ENCODE measurements at regions of chr1 and their contacts with region 1.

Region 1: DNA sequence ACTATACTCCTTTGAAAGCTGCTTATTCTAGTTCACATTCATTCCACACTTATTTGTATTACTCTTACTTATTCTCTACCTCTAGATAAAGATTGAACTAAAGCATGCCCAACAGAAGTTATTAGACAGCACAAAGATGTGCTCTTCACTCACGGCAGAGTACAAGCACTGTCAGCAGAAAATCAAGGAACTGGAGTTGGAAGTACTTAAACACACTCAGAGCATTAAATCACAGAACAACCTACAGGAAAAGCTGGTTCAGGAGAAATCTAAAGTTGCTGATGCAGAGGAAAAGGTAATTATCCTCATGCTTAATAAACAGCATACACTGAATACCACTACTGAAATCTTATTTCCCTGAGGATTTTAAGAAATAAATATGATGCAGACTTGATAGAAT is 81.3 kb upstream of the PPIH start:
- DNase-seq: no peak
- ATAC-seq: no peak
- H3K4me3 Mint-ChIP-seq: no peak overlapping the region
- H3K27ac Mint-ChIP-seq: no peak overlapping the region
- H3K4me1 Mint-ChIP-seq: no peaks in the 10 kb centered on the region
- H3K27me3 Mint-ChIP-seq: no peaks in the 10 kb centered on the region
- CTCF ChIP-seq: no peak

Region 2: DNA sequence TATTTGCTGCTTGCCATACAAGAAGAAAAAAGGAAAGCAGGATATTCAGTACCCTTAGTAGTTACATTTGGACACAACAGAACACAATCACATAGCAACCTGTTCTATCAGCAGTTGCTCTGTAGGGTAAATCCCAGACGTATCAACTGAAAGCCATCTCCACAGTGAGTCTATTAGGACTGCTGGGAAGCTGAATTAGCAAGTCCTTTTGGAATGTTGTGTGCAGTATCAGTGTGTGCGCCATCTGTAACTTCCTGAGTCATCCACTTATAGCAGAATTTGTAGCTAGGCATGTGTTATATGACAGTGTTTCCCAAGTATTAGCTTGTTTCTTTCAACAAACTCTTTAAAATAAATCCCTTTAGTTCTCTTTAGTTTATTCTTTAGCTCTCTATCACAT is 92.6 kb before region 1 on chr1:
- CTCF ChIA-PET with region 1: no interaction called
- POLR2A ChIA-PET with region 1: no interaction called
- intact Hi-C with region 1: no loop called
- DNase-seq: no peak
- ATAC-seq: no peak
- H3K4me3 Mint-ChIP-seq: no peak overlapping the region
- H3K27ac Mint-ChIP-seq: no peak overlapping the region
- H3K4me1 Mint-ChIP-seq: no peaks in the 10 kb centered on the region
- H3K27me3 Mint-ChIP-seq: no peaks in the 10 kb centered on the region
- CTCF ChIP-seq: no peak

Region 3: DNA sequence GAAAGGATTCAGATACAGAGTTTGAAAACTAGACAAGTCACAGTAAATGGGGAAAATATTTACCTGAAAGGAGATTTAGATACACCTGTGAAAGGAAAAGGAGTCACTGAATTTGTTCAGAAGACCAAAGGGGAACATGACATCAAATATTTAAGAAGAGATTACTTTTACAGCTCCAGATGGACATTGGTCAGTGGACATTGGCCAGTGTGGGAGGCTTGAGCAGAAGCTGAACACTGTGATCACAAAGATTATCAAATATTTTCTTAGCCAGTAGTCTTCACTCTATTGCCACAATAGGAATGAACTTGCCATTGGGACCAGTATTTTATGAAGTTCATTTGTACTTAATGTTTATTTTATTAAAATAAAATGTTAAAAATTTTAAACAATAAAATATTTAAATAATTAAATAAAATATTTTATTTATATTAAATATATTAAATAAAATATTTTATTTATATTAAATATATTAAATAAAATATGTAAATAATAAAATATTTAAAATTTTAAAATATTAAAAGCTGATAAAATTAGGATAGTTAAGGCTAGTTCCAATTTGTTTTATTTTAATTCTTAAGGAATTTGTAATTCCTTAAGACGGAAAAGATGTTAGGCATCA is 19.6 kb before region 1 on chr1:
- CTCF ChIA-PET with region 1: no interaction called
- POLR2A ChIA-PET with region 1: no interaction called
- intact Hi-C with region 1: no loop called
- DNase-seq: no peak
- ATAC-seq: no peak
- H3K4me3 Mint-ChIP-seq: no peak overlapping the region
- H3K27ac Mint-ChIP-seq: no peak overlapping the region
- H3K4me1 Mint-ChIP-seq: no peaks in the 10 kb centered on the region
- H3K27me3 Mint-ChIP-seq: no peaks in the 10 kb centered on the region
- CTCF ChIP-seq: no peak

Region 4: GRCh38 chr1:42730988-42731387 is 154.1 kb after region 1 on chr1:
- CTCF ChIA-PET with region 1: interaction called, 8 read pairs
- POLR2A ChIA-PET with region 1: no interaction called
- intact Hi-C with region 1: loop called (anchors 5 kb)
- DNase-seq: peak; percentile 83
- ATAC-seq: peak; percentile 86
- H3K4me3 Mint-ChIP-seq: no peak overlapping the region
- H3K27ac Mint-ChIP-seq: no peak overlapping the region
- H3K4me1 Mint-ChIP-seq: peaks cover 4% of the 10 kb centered on the region
- H3K27me3 Mint-ChIP-seq: no peaks in the 10 kb centered on the region
- CTCF ChIP-seq: peak; percentile 60

Region 5: GRCh38 chr1:42747125-42747524 is 170.2 kb after region 1 on chr1:
- CTCF ChIA-PET with region 1: interaction called, 7 read pairs
- POLR2A ChIA-PET with region 1: interaction called, 3 read pairs
- intact Hi-C with region 1: loop called (anchors 5 kb)
- DNase-seq: peak; percentile 55
- ATAC-seq: no peak
- H3K4me3 Mint-ChIP-seq: no peak overlapping the region
- H3K27ac Mint-ChIP-seq: no peak overlapping the region
- H3K4me1 Mint-ChIP-seq: no peaks in the 10 kb centered on the region
- H3K27me3 Mint-ChIP-seq: no peaks in the 10 kb centered on the region
- CTCF ChIP-seq: peak; percentile 62